ENCODE measurements at regions of chr3 and their contacts with region 1.

Region 1: DNA sequence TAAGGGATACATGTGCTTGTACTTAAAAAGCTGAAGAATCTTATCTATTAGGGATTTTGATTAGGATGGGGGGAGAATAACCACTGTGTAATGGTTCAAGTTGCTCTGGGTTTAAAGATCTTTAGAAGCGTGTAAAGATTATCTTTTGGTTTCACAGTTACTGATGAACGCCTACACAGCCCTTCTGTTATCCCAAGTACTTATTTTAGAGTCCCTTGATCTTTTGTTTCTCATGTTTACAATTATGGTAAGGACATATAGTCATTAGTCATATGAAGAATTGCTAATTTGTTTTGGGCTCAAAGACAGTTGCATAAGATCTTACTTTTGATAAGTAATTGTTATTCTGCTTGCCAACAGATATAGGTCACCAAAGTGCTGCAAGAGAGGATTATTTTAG is 160.1 kb downstream of the PLCL2 start:
- DNase-seq: no peak
- H3K4me3 Mint-ChIP-seq: no peak overlapping the region
- H3K27ac Mint-ChIP-seq: peak overlapping the region; percentile 20
- H3K4me1 Mint-ChIP-seq: peaks cover 54% of the 10 kb centered on the region
- H3K27me3 Mint-ChIP-seq: no peaks in the 10 kb centered on the region

Region 2: GRCh38 chr3:16897254-16897926 is 147.5 kb before region 1 on chr3:
- intact Hi-C with region 1: no loop called
- DNase-seq: no peak
- H3K4me3 Mint-ChIP-seq: no peak overlapping the region
- H3K27ac Mint-ChIP-seq: no peak overlapping the region
- H3K4me1 Mint-ChIP-seq: peaks cover 69% of the 10 kb centered on the region
- H3K27me3 Mint-ChIP-seq: no peaks in the 10 kb centered on the region

Region 3: DNA sequence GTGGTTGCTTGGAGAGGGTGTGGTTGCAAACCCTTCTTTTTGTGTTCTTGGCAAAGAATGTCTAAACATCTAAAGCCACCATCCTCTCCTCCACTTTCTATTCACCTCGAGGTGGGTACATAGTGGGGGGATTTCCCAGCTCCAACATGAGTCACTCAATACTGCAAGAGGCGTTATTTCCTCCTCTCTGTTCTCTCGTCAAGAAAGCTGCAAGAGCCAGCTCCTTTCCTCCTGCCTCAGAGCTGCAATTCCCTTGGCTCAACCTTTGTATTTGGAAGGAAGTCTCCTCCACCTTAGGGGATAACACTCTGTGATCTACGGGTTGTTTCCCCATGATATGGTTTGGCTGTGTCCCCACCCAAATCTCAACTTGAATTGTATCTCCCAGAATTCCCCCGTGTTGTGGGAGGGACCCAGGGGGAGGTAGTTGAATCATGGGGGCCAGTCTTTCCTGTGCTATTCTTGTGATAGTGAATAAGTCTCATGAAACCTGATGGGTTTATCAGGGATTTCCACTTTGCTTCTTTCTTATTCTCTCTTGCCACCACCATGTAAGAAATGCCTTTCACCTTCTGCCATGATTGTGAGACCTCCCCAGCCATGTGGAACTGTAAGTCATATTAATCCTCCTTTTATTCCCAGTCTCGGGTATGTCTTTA is 21.7 kb before region 1 on chr3:
- intact Hi-C with region 1: loop called (anchors 1 kb)
- DNase-seq: peak; percentile 24
- H3K4me3 Mint-ChIP-seq: peak overlapping the region; percentile 56
- H3K27ac Mint-ChIP-seq: peak overlapping the region; percentile 73
- H3K4me1 Mint-ChIP-seq: peaks cover 51% of the 10 kb centered on the region
- H3K27me3 Mint-ChIP-seq: no peaks in the 10 kb centered on the region

Region 4: DNA sequence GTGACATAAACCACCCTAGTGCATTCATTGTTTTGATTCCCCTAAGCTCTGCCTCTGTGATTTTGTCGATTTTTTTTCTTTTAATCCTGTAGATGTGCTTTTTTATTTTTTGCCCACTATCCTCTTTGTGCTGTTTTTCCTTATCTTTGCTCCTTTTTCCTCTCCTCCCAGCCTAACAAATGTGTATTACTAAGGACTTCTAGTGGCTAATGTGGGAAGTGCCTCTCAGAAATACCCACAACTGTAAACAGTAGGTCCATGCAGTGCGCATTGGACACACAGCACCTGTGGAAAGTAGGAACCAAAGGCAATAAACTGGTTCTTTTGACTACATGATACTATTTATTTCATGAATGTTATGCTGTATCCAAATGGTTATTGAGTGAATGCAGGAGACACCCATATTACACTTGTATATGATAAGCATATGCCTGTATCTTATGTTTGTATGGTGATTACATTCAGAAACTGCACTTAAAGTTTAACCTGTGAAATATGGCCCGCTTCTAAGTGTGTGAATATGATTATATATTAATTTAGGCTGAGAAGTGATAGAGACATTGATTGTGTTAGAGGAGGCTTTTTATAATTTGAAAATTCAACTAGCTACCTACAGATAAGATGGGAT is 12.3 kb before region 1 on chr3:
- intact Hi-C with region 1: loop called (anchors 2 kb)
- DNase-seq: no peak
- H3K4me3 Mint-ChIP-seq: no peak overlapping the region
- H3K27ac Mint-ChIP-seq: no peak overlapping the region
- H3K4me1 Mint-ChIP-seq: peaks cover 60% of the 10 kb centered on the region
- H3K27me3 Mint-ChIP-seq: no peaks in the 10 kb centered on the region

Region 5: GRCh38 chr3:17077606-17078005 is 32.8 kb after region 1 on chr3:
- intact Hi-C with region 1: loop called (anchors 5 kb)
- DNase-seq: no peak
- H3K4me3 Mint-ChIP-seq: no peak overlapping the region
- H3K27ac Mint-ChIP-seq: peak overlapping the region; percentile 29
- H3K4me1 Mint-ChIP-seq: peaks cover 61% of the 10 kb centered on the region
- H3K27me3 Mint-ChIP-seq: no peaks in the 10 kb centered on the region

Measured in activated T-helper 2 cell treated with anti-CD3 and anti-CD28 coated beads, Interferon-gamma antibody, Interleukin-2, Interleukin-4, amounts not matched to agents 10 μg/mL and 5 μg/mL and 100 μg/mL, durations not matched to agents 14 hours and 24 hours and 36 hours (primary cell).